Panc1 (cell line): ENCODE measurements at regions of chr15 and their contacts with region 1.

Region 1: DNA sequence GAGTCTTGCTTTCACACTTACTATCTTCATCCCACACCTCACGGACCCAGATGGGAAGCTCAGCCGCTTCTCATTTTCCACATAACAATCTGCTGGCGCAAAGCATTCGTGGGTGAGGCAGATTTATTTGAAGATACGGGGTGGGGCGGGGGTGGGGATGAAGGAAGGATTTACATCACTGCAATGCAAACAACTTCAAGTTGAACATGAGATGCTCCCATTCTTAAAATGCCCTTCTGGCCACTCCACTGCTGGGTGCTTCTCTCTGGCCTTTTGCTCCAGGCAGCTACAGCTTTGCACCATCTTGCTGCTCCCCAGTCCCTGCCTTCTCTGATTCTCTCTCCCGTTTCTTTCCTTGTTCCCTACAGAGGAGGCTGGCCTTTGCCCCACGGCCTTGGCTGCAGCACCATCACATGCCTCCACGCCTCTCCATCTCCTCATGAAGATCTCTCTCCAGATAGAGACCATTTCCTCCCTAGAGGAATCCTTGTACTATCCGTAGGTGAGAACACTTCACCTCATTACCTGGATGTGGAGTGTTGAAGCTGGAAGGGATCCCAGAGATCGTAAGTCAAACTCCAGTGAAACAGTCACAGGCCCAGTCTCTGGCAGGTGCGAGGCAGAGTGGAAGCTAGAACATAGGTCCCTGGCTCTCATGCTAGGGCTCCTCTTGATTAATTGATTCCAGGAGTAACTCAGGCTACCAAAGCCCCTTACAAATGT is 175.9 kb downstream of the RPLP1 start:
- DNase-seq: no peak
- ATAC-seq: no peak
- H3K4me3 ChIP-seq: no peak overlapping the region
- H3K27ac ChIP-seq: no peak overlapping the region
- H3K4me1 ChIP-seq: no peaks in the 10 kb centered on the region
- H3K27me3 ChIP-seq: peaks cover 4% of the 10 kb centered on the region
- CTCF ChIP-seq: no peak

Region 2: GRCh38 chr15:69881766-69882165 is 253.2 kb after region 1 on chr15:
- CTCF ChIA-PET with region 1: no interaction called
- POLR2A ChIA-PET with region 1: no interaction called
- in situ Hi-C with region 1: no loop called
- intact Hi-C with region 1: no loop called
- DNase-seq: no peak
- ATAC-seq: no peak
- H3K4me3 ChIP-seq: no peak overlapping the region
- H3K27ac ChIP-seq: no peak overlapping the region
- H3K4me1 ChIP-seq: no peaks in the 10 kb centered on the region
- H3K27me3 ChIP-seq: no peaks in the 10 kb centered on the region
- CTCF ChIP-seq: no peak

Region 3: DNA sequence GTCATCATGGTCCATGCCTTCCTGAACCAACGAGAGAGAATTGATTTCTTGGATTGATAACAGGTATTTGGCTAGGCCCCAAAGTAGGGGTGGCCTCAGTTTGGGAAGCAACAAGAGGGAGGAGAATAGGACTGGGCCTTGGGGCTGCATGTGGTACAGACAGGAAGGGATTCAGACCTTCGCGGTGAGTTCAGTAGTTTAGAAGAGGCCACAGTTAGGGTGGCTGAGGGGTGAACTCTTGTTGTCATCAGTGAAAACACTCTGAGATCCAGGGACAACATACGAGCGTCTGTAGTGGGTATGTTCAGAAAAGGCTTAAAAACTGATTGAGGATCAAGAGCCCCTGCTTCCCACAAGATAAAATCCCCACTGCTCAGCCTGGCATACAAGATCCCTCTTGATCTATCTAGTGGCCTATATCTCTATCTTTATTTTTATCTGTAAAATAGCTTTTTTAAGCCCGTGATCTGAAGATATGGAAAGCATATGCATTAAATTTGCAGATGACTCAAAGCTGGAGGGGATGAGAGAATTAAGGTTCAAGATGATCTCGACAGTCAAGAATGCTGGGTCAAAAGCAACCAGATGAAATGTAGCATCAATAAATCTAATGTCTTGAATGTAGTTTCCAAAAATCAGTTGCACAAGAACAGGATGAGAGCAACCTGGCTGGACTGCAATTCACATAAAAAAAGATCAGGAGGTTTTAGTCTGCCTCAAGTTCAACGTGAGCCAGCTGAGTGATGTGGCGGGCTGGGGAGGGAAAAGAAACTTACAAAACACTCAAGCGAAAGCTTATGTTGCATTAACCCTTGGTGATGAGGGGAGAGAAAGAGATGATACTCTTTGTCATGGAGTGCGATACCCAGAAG is 690.3 kb after region 1 on chr15:
- CTCF ChIA-PET with region 1: no interaction called
- POLR2A ChIA-PET with region 1: no interaction called
- in situ Hi-C with region 1: no loop called
- intact Hi-C with region 1: loop called (anchors 5 kb)
- DNase-seq: no peak
- ATAC-seq: no peak
- H3K4me3 ChIP-seq: no peak overlapping the region
- H3K27ac ChIP-seq: no peak overlapping the region
- H3K4me1 ChIP-seq: peaks cover 14% of the 10 kb centered on the region
- H3K27me3 ChIP-seq: no peaks in the 10 kb centered on the region
- CTCF ChIP-seq: no peak